ENCODE measurements at regions of chr3 and their contacts with region 1.

Region 1: GRCh38 chr3:51498876-51499738 is 708 bp downstream of the DCAF1 start:
- DNase-seq: peak; percentile 87 to 96
- H3K4me3 ChIP-seq: peak overlapping the region; percentile 69 to 84 (median 75)
- H3K27ac ChIP-seq: peak overlapping the region; percentile 88
- H3K4me1 ChIP-seq: no peaks in the 10 kb centered on the region
- H3K27me3 ChIP-seq: 0 out of 7 replicates have a peak, but pooled peaks cover 0 to 2% (median 0%) of the 10 kb centered on the region in 4 experiments
- CTCF ChIP-seq: no peak
- EP300 ChIP-seq: 0 out of 3 replicates have a peak, but pooled peaks of 1 of the 2 experiments have one; percentile 31
- POLR2A ChIP-seq: peak in 1 of 2 experiments; percentile 88; a peak in 2 of 3 replicates
- RAD21 ChIP-seq: no peak

Region 2: DNA sequence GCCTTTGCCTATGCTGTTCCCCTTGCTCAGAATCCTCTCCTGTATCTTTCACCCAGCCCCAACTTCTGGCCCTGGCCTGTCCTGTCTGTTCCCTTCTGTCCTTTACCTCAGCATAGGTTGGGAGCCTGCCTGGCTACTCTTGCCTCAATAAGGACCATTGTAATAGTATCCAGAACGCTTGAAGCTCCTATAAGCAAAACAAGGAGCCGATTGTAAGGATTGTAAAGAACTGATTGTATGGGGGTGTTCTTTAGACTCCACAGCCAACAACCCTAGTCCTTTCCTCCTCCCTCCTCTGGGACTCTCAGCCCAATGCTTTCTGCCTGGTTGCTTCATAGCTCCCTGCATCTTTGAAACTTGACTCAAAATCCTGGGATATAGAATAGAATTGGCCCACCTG is 20.7 kb after region 1 on chr3:
- CTCF ChIA-PET with region 1: interaction called, 16 read pairs
- POLR2A ChIA-PET with region 1: interaction called, 4 read pairs
- DNase-seq: no peak
- H3K4me3 ChIP-seq: no peak overlapping the region
- H3K27ac ChIP-seq: no peak overlapping the region
- H3K4me1 ChIP-seq: no peaks in the 10 kb centered on the region
- H3K27me3 ChIP-seq: no peaks in the 10 kb centered on the region
- CTCF ChIP-seq: no peak
- EP300 ChIP-seq: no peak
- POLR2A ChIP-seq: no peak
- RAD21 ChIP-seq: no peak

Region 3: DNA sequence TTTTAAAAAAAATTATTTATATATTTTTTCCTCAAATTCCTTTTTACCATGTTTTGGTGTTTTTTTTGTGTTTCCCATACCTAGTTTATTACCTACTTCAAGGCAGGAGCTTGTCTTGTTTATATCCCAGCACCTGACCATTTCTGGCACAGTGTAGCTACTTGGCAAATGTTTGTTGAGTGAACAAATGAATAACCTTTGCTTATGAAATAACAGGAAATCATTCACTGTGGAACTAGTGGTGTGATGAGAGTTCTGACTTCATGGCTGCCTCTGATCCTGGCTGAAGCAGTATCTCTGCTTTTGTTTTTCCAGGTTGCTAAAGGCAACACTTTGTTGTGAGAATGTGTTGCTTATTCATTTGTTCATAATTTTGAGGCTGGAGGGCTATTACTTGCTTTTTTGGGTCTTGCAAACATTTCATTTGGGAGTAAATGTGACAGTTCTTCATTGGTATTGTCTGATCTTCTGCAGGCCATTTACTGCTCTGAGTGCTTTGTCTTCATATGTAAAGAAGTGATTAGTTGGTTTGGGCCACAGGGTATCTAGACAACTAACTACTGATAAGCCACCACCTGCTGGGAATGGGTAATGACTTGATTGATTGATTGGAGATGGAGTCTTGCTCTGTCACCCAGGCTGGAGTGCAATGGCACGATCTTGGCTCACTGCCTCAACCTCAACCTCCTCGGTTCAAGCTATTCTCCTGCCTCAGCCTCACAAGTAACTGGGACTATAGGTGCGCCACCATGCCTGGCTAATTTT is 45.1 kb after region 1 on chr3:
- CTCF ChIA-PET with region 1: interaction called, 18 read pairs
- POLR2A ChIA-PET with region 1: interaction called, 21 read pairs
- DNase-seq: no peak
- H3K4me3 ChIP-seq: no peak overlapping the region
- H3K27ac ChIP-seq: no peak overlapping the region
- H3K4me1 ChIP-seq: peaks cover 0 to 7% (median 3%) of the 10 kb centered on the region in 4 experiments; a peak in 5 of 7 replicates
- H3K27me3 ChIP-seq: no peaks in the 10 kb centered on the region
- CTCF ChIP-seq: no peak
- EP300 ChIP-seq: no peak
- POLR2A ChIP-seq: no peak
- RAD21 ChIP-seq: no peak

Region 4: GRCh38 chr3:51622868-51623267 is 123.8 kb after region 1 on chr3:
- CTCF ChIA-PET with region 1: interaction called, 11 read pairs
- POLR2A ChIA-PET with region 1: no interaction called
- DNase-seq: no peak
- H3K4me3 ChIP-seq: no peak overlapping the region
- H3K27ac ChIP-seq: no peak overlapping the region; the same call in 1 of the 2 replicates
- H3K4me1 ChIP-seq: peaks cover 0 to 5% (median 0%) of the 10 kb centered on the region in 4 experiments; a peak in 2 of 7 replicates
- H3K27me3 ChIP-seq: no peaks in the 10 kb centered on the region
- CTCF ChIP-seq: no peak
- EP300 ChIP-seq: no peak
- POLR2A ChIP-seq: no peak
- RAD21 ChIP-seq: no peak

Region 5: DNA sequence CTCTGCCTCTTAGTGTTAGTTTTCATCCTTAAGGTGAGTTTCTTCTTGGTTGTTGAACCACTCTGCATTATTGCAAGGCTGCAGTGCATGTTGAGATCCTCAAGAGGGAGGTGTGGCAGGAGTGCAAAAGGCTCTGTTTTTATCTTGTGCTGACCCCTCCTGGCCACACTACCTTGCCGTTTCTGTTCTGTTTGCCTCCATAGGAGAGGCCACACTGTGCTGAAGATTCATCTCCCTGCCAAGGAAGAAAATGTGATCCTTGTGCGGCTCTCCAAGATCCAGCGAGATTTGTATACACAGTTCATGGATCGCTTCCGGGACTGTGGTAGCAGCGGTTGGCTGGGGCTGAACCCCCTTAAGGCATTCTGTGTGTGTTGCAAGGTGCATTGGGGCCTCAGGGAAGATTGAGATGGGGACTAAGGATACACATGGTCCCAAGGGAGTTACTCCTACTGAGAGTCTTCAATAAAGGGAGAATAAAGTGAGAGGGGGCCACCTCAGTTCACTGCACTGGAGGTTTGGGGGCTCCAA is 138.9 kb after region 1 on chr3:
- CTCF ChIA-PET with region 1: interaction called, 103 read pairs
- POLR2A ChIA-PET with region 1: interaction called, 7 read pairs
- DNase-seq: peak; percentile 58 to 67
- H3K4me3 ChIP-seq: no peak overlapping the region
- H3K27ac ChIP-seq: no peak overlapping the region
- H3K4me1 ChIP-seq: no peaks in the 10 kb centered on the region
- H3K27me3 ChIP-seq: no peaks in the 10 kb centered on the region
- CTCF ChIP-seq: peak; percentile 82 to 100 (median 100)
- EP300 ChIP-seq: no peak
- POLR2A ChIP-seq: no peak
- RAD21 ChIP-seq: peak; percentile 84

Region 6: GRCh38 chr3:51682079-51682478 is 183.0 kb after region 1 on chr3:
- CTCF ChIA-PET with region 1: interaction called, 83 read pairs
- POLR2A ChIA-PET with region 1: interaction called, 11 read pairs
- DNase-seq: peak; percentile 61 to 65
- H3K4me3 ChIP-seq: no peak overlapping the region
- H3K27ac ChIP-seq: no peak overlapping the region
- H3K4me1 ChIP-seq: peaks cover 0 to 9% (median 3%) of the 10 kb centered on the region in 4 experiments; a peak in 3 of 7 replicates
- H3K27me3 ChIP-seq: no peaks in the 10 kb centered on the region
- CTCF ChIP-seq: peak; percentile 72 to 94 (median 78)
- EP300 ChIP-seq: no peak
- POLR2A ChIP-seq: no peak
- RAD21 ChIP-seq: peak; percentile 93

Measured in H1 (cell line).